Activated naive CD4-positive, alpha-beta T cell treated with anti-CD3 and anti-CD28 coated beads for 36 hours (primary cell): ENCODE measurements at regions of chr17 and their contacts with region 1.

Region 1: GRCh38 chr17:59521204-59522126 is 43.9 kb upstream of the DHX40 start:
- DNase-seq: peak; percentile 80
- H3K4me3 Mint-ChIP-seq: no peak overlapping the region
- H3K27ac Mint-ChIP-seq: no peak overlapping the region
- H3K4me1 Mint-ChIP-seq: peaks cover 4% of the 10 kb centered on the region
- H3K27me3 Mint-ChIP-seq: peaks cover under 1% of the 10 kb centered on the region

Region 2: GRCh38 chr17:59311130-59311920 is 210.1 kb before region 1 on chr17:
- CTCF ChIA-PET with region 1: interaction called, 8 read pairs
- intact Hi-C with region 1: loop called (anchors 1 kb)
- DNase-seq: peak; percentile 54
- H3K4me3 Mint-ChIP-seq: no peak overlapping the region
- H3K27ac Mint-ChIP-seq: no peak overlapping the region
- H3K4me1 Mint-ChIP-seq: no peaks in the 10 kb centered on the region
- H3K27me3 Mint-ChIP-seq: no peaks in the 10 kb centered on the region

Region 3: DNA sequence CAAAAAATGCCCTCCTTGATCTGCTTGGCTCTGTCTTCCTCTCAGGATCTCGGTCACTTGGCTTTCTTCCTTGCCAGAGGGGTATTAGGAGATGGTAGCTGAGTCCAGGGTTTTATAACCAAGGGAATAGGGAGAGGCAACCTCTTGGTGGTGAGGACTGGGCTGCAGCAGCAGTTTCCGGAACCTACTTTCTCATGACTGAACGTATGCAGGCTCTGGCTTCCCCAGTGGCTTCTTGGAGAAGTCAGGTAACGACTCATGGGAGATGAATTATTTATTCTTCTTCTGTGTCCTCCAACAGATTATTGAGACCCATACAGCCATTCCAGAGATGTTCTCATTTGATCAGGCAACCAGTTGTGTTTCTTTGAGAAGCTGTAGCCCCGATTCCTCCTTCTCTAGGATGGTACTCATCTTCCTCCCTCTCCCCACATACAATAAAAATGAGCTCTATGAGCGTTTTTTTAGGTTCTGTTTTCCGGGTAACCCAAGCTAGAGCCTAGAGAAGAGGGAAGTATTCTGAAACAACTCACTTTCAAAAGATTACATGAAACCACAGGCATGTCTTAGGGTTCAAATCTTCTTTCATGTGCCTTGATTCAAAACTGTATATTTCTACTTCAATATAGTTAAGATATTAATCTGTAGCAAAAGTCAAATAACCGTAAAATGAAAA is 21.6 kb after region 1 on chr17:
- CTCF ChIA-PET with region 1: no interaction called
- intact Hi-C with region 1: no loop called
- DNase-seq: no peak
- H3K4me3 Mint-ChIP-seq: no peak overlapping the region
- H3K27ac Mint-ChIP-seq: no peak overlapping the region
- H3K4me1 Mint-ChIP-seq: no peaks in the 10 kb centered on the region
- H3K27me3 Mint-ChIP-seq: peaks cover 11% of the 10 kb centered on the region

Region 4: DNA sequence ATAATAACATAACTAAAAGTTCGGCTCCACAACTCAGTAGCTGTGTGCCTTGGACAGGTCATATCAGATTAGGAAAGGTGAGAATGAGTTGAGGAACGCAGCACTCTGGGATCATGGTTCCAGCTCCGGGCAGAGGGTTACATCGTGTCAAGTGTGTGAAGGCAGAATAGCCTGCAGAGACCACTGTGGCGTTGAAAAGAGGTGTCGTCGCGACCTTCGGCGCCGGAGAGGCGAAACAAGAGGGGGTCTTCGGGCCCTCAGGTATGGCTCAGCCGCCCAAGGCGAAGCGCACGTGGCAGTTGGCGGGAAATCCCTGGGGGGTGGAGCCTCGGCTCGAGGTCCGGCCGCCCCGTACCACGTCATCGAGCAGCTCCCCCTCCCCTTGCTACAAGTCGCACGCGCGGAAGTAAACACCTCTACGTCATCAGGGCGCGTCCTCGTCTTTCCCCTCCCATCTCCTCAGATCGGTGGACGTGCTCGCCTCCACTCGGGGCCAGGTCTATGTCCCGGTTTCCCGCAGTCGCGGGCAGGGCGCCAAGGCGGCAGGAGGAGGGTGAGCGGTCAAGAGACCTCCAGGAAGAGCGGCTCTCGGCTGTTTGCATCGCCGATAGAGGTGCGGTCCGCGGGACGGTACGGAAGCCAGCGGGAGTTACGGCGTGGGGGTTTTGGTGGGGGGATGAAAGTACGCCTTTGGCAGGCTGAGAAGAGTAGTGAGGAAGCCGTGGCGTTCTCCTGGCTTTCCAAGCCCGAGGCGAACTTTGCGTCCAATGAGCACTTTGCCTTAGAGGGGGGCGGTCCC is 43.9 kb after region 1 on chr17 and contains the start of gene DHX40:
- CTCF ChIA-PET with region 1: interaction called, 8 read pairs
- intact Hi-C with region 1: loop called (anchors 2 kb)
- DNase-seq: peak; percentile 98
- H3K4me3 Mint-ChIP-seq: peak within 1 kb of the TSS; percentile 100
- H3K27ac Mint-ChIP-seq: peak within 1 kb of the TSS; percentile 98
- H3K4me1 Mint-ChIP-seq: peaks cover 21% of the 10 kb centered on the region
- H3K27me3 Mint-ChIP-seq: no peaks in the 10 kb centered on the region
- total RNA-seq, gene DHX40: 14.2 to 15.3 TPM

Region 5: DNA sequence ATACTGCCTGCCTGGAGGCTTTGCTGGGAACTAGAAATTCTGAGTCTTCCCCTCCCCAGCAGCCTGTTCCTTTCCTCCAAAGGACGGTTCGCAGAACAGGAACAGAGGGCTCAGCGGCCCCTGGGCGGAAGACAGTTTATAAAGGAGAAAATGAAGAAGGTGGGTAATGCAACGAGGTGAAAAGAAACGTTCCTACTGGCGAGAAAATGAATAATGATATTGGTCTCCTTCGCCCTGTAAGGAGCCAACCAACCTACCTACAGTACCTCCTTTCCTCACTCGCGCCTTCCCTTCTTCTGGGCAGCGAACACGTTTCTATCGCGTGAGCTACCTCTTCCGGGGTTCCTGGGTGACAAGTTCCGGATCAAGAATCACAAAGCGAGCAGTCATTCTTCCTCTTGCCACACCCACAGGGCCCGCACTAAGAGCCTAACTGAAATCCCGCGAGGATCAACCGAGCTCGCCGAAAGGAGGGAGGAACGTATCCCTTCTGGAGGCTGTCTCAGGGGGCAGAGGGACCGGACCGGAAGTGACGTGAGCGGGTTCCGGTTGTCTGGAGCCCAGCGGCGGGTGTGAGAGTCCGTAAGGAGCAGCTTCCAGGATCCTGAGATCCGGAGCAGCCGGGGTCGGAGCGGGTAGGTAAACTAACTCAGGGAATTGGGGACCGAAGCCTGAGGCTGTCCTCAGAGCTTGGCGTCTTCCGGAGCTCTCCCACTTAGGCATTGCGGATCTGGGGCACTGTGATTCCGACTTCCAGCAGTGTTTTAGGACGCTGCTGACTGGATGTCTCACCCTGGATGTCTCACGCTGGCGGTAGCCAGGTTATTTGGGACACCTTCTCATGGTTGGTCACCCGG is 185.9 kb after region 1 on chr17 and contains the starts of genes PTRH2 and VMP1:
- CTCF ChIA-PET with region 1: no interaction called
- intact Hi-C with region 1: loop called (anchors 1 kb)
- DNase-seq: peak; percentile 97
- H3K4me3 Mint-ChIP-seq: peak within 1 kb of the TSS; percentile 94
- H3K27ac Mint-ChIP-seq: peak within 1 kb of the TSS; percentile 92
- H3K4me1 Mint-ChIP-seq: peaks cover 54% of the 10 kb centered on the region
- H3K27me3 Mint-ChIP-seq: no peaks in the 10 kb centered on the region
- total RNA-seq, gene PTRH2: 19.7 to 24.4 TPM
- total RNA-seq, gene VMP1: 423 to 438 TPM

Region 6: DNA sequence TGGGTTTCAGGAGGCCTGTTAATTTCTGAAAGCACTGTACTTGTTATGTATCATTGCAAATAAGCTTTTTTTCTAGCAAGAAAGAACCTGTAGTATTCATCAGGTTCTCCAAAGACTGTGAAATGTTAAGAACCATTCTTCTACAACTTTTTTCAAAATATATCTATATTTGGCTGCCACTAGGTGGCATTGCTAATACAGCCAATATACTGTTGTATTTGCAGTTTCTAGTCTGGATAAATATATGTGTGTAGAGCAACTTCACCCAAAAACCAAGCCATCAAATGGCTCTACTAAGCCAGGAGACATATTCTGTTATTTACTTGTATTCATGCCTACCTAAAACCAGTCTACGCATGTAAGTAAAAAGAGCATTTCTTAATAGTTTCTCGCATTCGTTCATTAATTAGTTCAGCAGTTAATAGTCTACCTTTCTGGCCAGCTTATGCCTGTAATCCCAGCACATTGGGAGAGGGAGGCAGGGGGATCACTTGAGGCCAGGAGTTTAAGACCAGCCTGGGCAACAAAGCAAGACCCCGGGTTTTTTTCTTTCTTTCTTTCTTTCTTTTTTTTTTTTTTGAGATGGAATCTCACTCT is 225.5 kb after region 1 on chr17:
- CTCF ChIA-PET with region 1: interaction called, 4 read pairs
- intact Hi-C with region 1: loop called (anchors 2 kb)
- DNase-seq: no peak
- H3K4me3 Mint-ChIP-seq: no peak overlapping the region
- H3K27ac Mint-ChIP-seq: peak overlapping the region; percentile 61
- H3K4me1 Mint-ChIP-seq: peaks cover 18% of the 10 kb centered on the region
- H3K27me3 Mint-ChIP-seq: no peaks in the 10 kb centered on the region

Region 7: GRCh38 chr17:59859444-59860025 is 338.1 kb after region 1 on chr17:
- CTCF ChIA-PET with region 1: no interaction called
- intact Hi-C with region 1: loop called (anchors 1 kb)
- DNase-seq: no peak
- H3K4me3 Mint-ChIP-seq: no peak overlapping the region
- H3K27ac Mint-ChIP-seq: peak overlapping the region; percentile 65
- H3K4me1 Mint-ChIP-seq: peaks cover 21% of the 10 kb centered on the region
- H3K27me3 Mint-ChIP-seq: no peaks in the 10 kb centered on the region

Region 8: GRCh38 chr17:59914274-59914854 is 392.9 kb after region 1 on chr17:
- CTCF ChIA-PET with region 1: no interaction called
- intact Hi-C with region 1: loop called (anchors 1 kb)
- DNase-seq: peak; percentile 32
- H3K4me3 Mint-ChIP-seq: no peak overlapping the region
- H3K27ac Mint-ChIP-seq: no peak overlapping the region
- H3K4me1 Mint-ChIP-seq: peaks cover 2% of the 10 kb centered on the region
- H3K27me3 Mint-ChIP-seq: no peaks in the 10 kb centered on the region